ENCODE measurements at regions of chr2 and their contacts with region 1.

Region 1: GRCh38 chr2:173354601-173355131 is at the start of gene CDCA7:
- DNase-seq: peak; percentile 19 to 40
- ATAC-seq: peak; percentile 75 to 79
- H3K4me3 ChIP-seq: peak within 1 kb of the TSS; percentile 60 to 84 (median 70)
- H3K27ac ChIP-seq: peak within 1 kb of the TSS; percentile 69 to 81 (median 74)
- H3K4me1 ChIP-seq: peaks cover 8 to 17% of the 10 kb centered on the region in 2 donors
- H3K27me3 ChIP-seq: peaks cover 0 to 18% (median 13%) of the 10 kb centered on the region in 3 donors
- CTCF ChIP-seq: peak in 1 of 5 experiments; percentile 13
- POLR2A ChIP-seq: no peak
- total RNA-seq, gene CDCA7: 1.1 to 3.3 (median 1.4) TPM in 3 of 4 donors, not detected in the other

Region 2: GRCh38 chr2:172972005-172972619 is 382.6 kb before region 1 on chr2:
- in situ Hi-C with region 1: loop called in 3 of 4 experiments (anchors 10 to 25 kb)
- intact Hi-C with region 1: loop called (anchors 5 kb)
- DNase-seq: no peak
- ATAC-seq: peak in 1 of 2 donors; percentile 57
- H3K4me3 ChIP-seq: no peak overlapping the region
- H3K27ac ChIP-seq: no peak overlapping the region
- H3K4me1 ChIP-seq: peaks cover 7 to 16% of the 10 kb centered on the region in 2 donors
- H3K27me3 ChIP-seq: no peaks in the 10 kb centered on the region
- CTCF ChIP-seq: peak; percentile 47 to 92 (median 56)
- POLR2A ChIP-seq: no peak

Region 3: DNA sequence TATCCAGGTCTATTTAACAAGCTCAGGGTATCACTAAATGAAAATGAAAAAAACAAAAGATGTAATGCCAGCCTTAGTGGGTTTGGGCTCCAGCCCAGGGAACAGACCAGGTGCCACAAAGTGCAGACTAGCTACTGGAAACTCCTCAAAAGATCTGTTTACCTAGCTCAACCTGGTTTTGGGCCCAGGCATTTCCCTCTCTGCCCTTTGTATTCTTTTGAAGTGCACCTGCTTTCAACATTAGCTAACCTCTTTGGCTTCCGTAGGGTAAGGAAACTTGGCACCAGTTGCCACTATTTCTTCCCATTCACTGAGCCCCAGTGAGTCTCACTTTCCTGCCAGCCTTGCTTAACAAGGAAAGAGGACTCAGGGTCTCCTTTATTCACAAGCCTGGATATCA is 123.6 kb before region 1 on chr2:
- in situ Hi-C with region 1: no loop called
- intact Hi-C with region 1: loop called (anchors 5 kb)
- DNase-seq: peak; percentile 49 to 50
- ATAC-seq: peak; percentile 76
- H3K4me3 ChIP-seq: no peak overlapping the region
- H3K27ac ChIP-seq: peak overlapping the region; percentile 55 to 76 (median 72)
- H3K4me1 ChIP-seq: peaks cover 48 to 59% of the 10 kb centered on the region in 2 donors
- H3K27me3 ChIP-seq: no peaks in the 10 kb centered on the region
- CTCF ChIP-seq: no peak
- POLR2A ChIP-seq: no peak

Measured in gastrocnemius medialis (tissue), 4 donors.